ENCODE measurements at regions of chr16 and their contacts with region 1.

Region 1: GRCh38 chr16:63289852-63290460 is 1253.7 kb upstream of the CDH8 start:
- DNase-seq: no peak
- ATAC-seq: peak; percentile 89
- H3K4me3 ChIP-seq: no peak overlapping the region
- H3K27ac ChIP-seq: no peak overlapping the region
- H3K4me1 ChIP-seq: no peaks in the 10 kb centered on the region
- H3K27me3 ChIP-seq: no peaks in the 10 kb centered on the region
- CTCF ChIP-seq: peak; percentile 56 to 71 (median 70)
- EP300 ChIP-seq: no peak
- POLR2A ChIP-seq: no peak
- RAD21 ChIP-seq: peak; percentile 81

Region 2: GRCh38 chr16:62190426-62190825 is 1099.5 kb before region 1 on chr16:
- CTCF ChIA-PET with region 1: interaction called, 21 read pairs
- POLR2A ChIA-PET with region 1: no interaction called
- RAD21 ChIA-PET with region 1: interaction called, 15 read pairs
- SMC1A ChIA-PET with region 1: interaction called, 4 read pairs
- in situ Hi-C with region 1: no loop called
- intact Hi-C with region 1: loop called (anchors 2 kb)
- DNase-seq: no peak
- ATAC-seq: peak; percentile 52; the same call in 1 of the 3 replicates
- H3K4me3 ChIP-seq: no peak overlapping the region
- H3K27ac ChIP-seq: no peak overlapping the region
- H3K4me1 ChIP-seq: no peaks in the 10 kb centered on the region
- H3K27me3 ChIP-seq: no peaks in the 10 kb centered on the region
- CTCF ChIP-seq: peak; percentile 29 to 43 (median 40); a peak in 4 of 6 replicates
- EP300 ChIP-seq: no peak
- POLR2A ChIP-seq: no peak
- RAD21 ChIP-seq: peak; percentile 48; the same call in 1 of the 2 replicates

Region 3: GRCh38 chr16:62225697-62226280 is 1064.2 kb before region 1 on chr16:
- CTCF ChIA-PET with region 1: interaction called, 39 read pairs
- POLR2A ChIA-PET with region 1: no interaction called
- RAD21 ChIA-PET with region 1: interaction called, 10 read pairs
- SMC1A ChIA-PET with region 1: interaction called, 18 read pairs
- in situ Hi-C with region 1: loop called (anchors 10 kb)
- intact Hi-C with region 1: loop called (anchors 1 kb)
- DNase-seq: peak; percentile 24
- ATAC-seq: peak; percentile 100
- H3K4me3 ChIP-seq: no peak overlapping the region
- H3K27ac ChIP-seq: no peak overlapping the region
- H3K4me1 ChIP-seq: no peaks in the 10 kb centered on the region
- H3K27me3 ChIP-seq: no peaks in the 10 kb centered on the region
- CTCF ChIP-seq: peak; percentile 46 to 61 (median 53); a peak in 4 of 6 replicates
- EP300 ChIP-seq: no peak
- POLR2A ChIP-seq: no peak
- RAD21 ChIP-seq: peak; percentile 53; the same call in 1 of the 2 replicates